ENCODE measurements at regions of chr16 and their contacts with region 1.

Region 1: DNA sequence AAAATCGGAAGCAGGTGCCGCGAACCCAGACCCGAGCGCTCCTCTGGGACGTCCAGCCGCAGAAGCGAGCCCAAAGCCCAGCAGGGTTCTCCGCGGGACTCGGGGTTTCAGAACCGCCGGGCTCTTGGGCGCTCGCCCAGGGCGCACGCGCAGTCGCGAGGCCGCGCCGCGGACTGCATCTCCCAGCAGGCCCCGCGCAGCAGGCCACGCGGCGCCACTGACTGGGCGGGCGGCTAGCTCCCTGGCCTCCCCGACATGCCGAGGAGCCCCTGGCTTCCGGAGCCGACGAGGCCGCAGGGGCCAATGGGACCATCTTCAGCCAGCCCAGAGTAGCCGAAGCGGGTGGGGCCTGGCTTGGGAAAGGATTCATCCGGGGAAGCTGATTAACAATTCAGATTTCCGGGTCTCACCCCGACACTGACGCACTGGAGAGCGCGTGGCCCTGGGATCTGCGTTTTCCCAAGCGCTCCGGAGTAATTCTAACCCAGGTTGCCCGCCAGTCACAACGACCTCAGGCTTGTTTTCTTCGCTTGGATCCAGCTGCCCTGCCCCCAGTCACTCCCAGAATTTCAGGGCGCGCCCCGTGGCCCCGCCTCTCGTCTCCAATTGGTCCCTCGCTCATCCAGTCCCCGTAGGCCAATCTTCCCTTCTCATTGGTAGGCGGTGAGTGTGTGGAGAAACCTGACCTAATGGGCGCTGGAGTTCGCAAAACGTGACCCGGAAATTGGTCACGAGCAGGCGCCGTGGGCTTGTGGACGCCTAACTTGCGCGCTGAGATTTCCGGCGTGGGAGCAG is at the start of gene ZNF263:
- DNase-seq: peak; percentile 96
- H3K4me3 Mint-ChIP-seq: peak within 1 kb of the TSS; percentile 95
- H3K27ac Mint-ChIP-seq: peak within 1 kb of the TSS; percentile 97
- H3K4me1 Mint-ChIP-seq: peaks cover 28% of the 10 kb centered on the region
- H3K27me3 Mint-ChIP-seq: no peaks in the 10 kb centered on the region
- total RNA-seq, gene ZNF263: 9.1 to 12.2 TPM

Region 2: GRCh38 chr16:2980227-2981086 is 302.5 kb before region 1 on chr16 and contains the start of gene PKMYT1:
- CTCF ChIA-PET with region 1: no interaction called
- intact Hi-C with region 1: no loop called
- DNase-seq: peak; percentile 95
- H3K4me3 Mint-ChIP-seq: peak within 1 kb of the TSS; percentile 81
- H3K27ac Mint-ChIP-seq: peak within 1 kb of the TSS; percentile 84
- H3K4me1 Mint-ChIP-seq: peaks cover 14% of the 10 kb centered on the region
- H3K27me3 Mint-ChIP-seq: no peaks in the 10 kb centered on the region
- total RNA-seq, gene PKMYT1: 128 to 136 TPM

Region 3: GRCh38 chr16:3135418-3135729 is 147.6 kb before region 1 on chr16:
- CTCF ChIA-PET with region 1: no interaction called
- intact Hi-C with region 1: no loop called
- DNase-seq: peak; percentile 29
- H3K4me3 Mint-ChIP-seq: peak overlapping the region; percentile 99
- H3K27ac Mint-ChIP-seq: peak overlapping the region; percentile 87
- H3K4me1 Mint-ChIP-seq: peaks cover 28% of the 10 kb centered on the region
- H3K27me3 Mint-ChIP-seq: no peaks in the 10 kb centered on the region

Region 4: GRCh38 chr16:3188925-3189825 is 93.8 kb before region 1 on chr16:
- CTCF ChIA-PET with region 1: no interaction called
- intact Hi-C with region 1: loop called (anchors 2 kb)
- DNase-seq: peak; percentile 76
- H3K4me3 Mint-ChIP-seq: peak overlapping the region; percentile 79
- H3K27ac Mint-ChIP-seq: peak overlapping the region; percentile 84
- H3K4me1 Mint-ChIP-seq: peaks cover 46% of the 10 kb centered on the region
- H3K27me3 Mint-ChIP-seq: peaks cover 73% of the 10 kb centered on the region

Region 5: DNA sequence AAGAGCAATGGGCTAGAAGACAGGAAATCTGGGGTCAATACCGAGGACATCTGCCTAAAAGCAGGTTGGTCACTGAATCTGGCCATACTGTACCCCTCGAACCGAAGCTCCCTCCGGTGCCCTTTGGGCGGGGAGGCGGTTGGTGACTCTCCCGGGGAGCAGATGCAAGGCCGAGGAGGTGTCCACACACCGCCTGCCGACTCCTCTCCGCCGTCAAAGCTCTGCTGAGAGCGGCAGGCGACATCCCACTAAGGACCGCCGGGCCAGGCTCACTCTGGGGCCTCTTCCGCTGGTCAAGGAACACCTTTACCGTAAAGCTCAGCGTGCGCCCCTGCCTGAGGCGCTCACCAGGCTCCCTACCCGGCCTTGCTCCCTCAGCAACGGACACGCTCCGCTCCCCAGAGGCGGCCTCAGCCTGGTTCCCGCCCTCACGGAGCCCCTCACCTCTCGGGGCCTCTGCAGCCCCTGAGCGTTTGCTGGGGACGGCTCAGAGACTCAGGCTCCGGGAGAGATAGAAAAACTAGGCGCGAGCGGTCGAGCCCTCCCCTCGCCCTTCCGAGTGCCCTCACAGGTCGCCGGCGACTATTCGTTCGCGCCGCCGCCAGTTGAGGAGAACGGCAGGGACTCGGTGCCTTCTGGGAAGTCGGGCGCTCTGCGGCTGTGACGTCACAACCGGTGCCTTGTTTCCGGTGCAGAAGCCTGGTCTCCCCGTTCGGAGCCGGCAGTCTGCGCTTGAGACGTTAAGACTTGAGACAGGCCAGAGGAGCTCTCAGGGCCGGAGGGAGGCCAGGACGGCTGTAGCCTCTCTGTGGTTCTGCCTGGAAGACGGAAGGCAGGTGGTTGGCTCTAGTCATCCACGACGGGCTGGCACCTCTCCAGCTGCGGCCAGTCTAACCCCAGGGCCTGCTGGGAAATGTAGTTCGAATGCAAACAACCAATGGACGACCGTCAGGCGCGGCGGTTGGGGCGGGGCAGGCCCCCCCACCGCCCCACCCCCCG is 48.1 kb before region 1 on chr16 and contains the start of gene ZNF200:
- CTCF ChIA-PET with region 1: no interaction called
- intact Hi-C with region 1: loop called (anchors 1 kb)
- DNase-seq: peak; percentile 98
- H3K4me3 Mint-ChIP-seq: peak within 1 kb of the TSS; percentile 83
- H3K27ac Mint-ChIP-seq: peak within 1 kb of the TSS; percentile 90
- H3K4me1 Mint-ChIP-seq: peaks cover 28% of the 10 kb centered on the region
- H3K27me3 Mint-ChIP-seq: no peaks in the 10 kb centered on the region
- total RNA-seq, gene ZNF200: 9.7 to 10.1 TPM

Region 6: GRCh38 chr16:3305109-3306068 is 22.5 kb after region 1 on chr16 and contains the starts of genes TIGD7 and ZNF75A:
- CTCF ChIA-PET with region 1: interaction called, 5 read pairs
- intact Hi-C with region 1: loop called (anchors 1 kb)
- DNase-seq: peak; percentile 84
- H3K4me3 Mint-ChIP-seq: peak within 1 kb of the TSS; percentile 79
- H3K27ac Mint-ChIP-seq: peak within 1 kb of the TSS; percentile 77
- H3K4me1 Mint-ChIP-seq: peaks cover 21% of the 10 kb centered on the region
- H3K27me3 Mint-ChIP-seq: no peaks in the 10 kb centered on the region
- total RNA-seq, gene TIGD7: 3.8 to 4.1 TPM
- total RNA-seq, gene ZNF75A: 10.5 to 12.4 TPM

Region 7: DNA sequence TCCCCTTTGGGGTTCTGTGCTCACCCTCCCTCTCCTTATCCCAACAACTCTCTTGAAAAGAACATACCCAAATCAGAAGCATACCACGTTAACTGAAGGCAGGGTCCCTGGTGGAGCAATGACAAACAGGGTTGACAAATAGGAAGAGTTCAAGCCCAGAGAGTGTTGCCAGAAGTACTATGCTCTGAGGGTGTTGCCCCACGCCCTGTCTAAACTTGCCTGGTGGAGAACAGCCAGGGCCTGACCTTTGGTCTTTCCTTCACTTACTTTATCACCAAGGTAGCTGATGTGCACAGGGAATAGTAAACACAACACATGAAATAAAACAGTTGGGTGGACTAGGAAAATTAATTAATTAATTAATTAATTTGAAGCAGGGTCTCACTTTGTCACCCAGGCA is 45.7 kb after region 1 on chr16:
- CTCF ChIA-PET with region 1: no interaction called
- intact Hi-C with region 1: no loop called
- DNase-seq: no peak
- H3K4me3 Mint-ChIP-seq: no peak overlapping the region
- H3K27ac Mint-ChIP-seq: no peak overlapping the region
- H3K4me1 Mint-ChIP-seq: no peaks in the 10 kb centered on the region
- H3K27me3 Mint-ChIP-seq: no peaks in the 10 kb centered on the region

Region 8: DNA sequence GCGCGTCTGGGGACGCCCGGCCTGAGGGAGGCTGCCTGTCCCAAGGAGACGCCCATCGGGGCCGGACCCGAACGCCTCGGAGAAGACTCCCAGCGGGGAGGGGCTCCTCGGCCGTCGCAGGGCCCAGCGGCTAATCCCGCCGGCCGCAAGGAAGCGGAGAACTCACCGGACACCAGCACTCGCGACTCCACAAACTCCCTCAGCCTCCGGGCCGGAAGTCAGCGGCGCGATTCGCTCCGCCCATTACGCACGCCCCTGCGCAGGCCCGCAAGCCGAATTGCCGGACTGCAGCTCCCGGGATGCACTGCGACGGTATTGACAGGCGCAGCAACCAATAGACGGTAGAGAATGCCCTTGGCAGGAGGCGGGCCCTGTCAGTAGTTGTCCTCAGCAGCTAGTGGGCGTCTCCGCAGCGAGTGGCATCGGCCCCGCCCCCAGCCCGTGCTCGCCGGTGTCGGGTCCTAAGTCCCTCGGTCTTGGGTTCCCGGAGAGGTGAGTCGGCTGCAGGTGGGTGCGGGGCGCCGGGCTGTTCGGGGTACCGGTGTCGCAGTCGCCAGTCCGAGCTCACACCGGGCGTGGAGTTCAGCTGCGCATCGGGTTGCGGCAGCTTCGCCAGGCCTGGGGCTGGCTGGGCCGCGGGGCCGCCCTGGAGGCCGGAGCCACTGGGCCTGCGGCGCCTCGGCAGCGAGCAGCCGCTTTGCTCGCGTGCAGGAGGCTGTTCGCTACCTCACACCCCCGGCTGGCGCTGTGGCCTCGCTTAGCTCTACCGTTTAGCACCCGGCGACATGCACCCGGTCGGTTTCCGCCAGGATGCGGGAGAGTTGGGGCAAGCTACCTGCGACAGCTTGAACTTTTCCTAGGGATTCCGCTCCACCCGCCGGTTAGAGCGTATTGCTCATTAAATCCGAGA is 118.1 kb after region 1 on chr16 and contains the starts of genes ZNF174 and ZSCAN32:
- CTCF ChIA-PET with region 1: no interaction called
- intact Hi-C with region 1: loop called (anchors 1 kb)
- DNase-seq: peak; percentile 99
- H3K4me3 Mint-ChIP-seq: peak within 1 kb of the TSS; percentile 86
- H3K27ac Mint-ChIP-seq: peak within 1 kb of the TSS; percentile 75
- H3K4me1 Mint-ChIP-seq: peaks cover 39% of the 10 kb centered on the region
- H3K27me3 Mint-ChIP-seq: no peaks in the 10 kb centered on the region
- total RNA-seq, gene ZNF174: 5.8 to 6.3 TPM
- total RNA-seq, gene ZSCAN32: 6.5 to 7.9 TPM

Region 9: DNA sequence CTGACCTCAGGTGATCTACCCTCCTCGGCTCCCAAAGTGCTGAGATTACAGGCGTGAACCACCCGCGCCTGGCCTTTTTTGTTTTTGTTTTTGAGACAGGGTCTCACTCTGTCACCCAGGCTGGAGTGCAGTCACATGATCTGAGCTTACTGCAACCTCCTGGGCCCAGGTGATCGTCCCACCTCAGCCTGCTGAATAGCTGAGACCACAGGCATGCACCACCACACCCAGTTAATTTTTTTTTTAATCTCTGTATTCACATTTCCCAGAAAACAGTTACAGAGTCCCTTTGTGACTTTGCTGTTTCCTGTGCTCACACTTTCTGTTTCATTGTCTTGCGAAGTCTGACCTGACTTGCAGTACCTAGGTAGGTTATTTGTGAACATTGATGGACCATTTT is 220.6 kb after region 1 on chr16:
- CTCF ChIA-PET with region 1: no interaction called
- intact Hi-C with region 1: loop called (anchors 1 kb)
- DNase-seq: peak; percentile 73
- H3K4me3 Mint-ChIP-seq: peak overlapping the region; percentile 88
- H3K27ac Mint-ChIP-seq: peak overlapping the region; percentile 89
- H3K4me1 Mint-ChIP-seq: peaks cover 68% of the 10 kb centered on the region
- H3K27me3 Mint-ChIP-seq: no peaks in the 10 kb centered on the region

Measured in activated naive CD4-positive, alpha-beta T cell treated with anti-CD3 and anti-CD28 coated beads for 36 hours (primary cell).